Dendritic cell treated with granulocyte-macrophage colony-stimulating factor and Interleukin-4, amounts not matched to agents 40 ng/mL and 50 ng/mL, for 4 days (primary cell): ENCODE measurements at regions of chr17 and their contacts with region 1.

Region 1: GRCh38 chr17:17237026-17237799 is at the start of gene FLCN:
- H3K4me3 Mint-ChIP-seq: peak within 1 kb of the TSS; percentile 99
- H3K27ac Mint-ChIP-seq: peak within 1 kb of the TSS; percentile 99
- H3K4me1 Mint-ChIP-seq: peaks cover 27% of the 10 kb centered on the region
- H3K27me3 Mint-ChIP-seq: no peaks in the 10 kb centered on the region

Region 2: DNA sequence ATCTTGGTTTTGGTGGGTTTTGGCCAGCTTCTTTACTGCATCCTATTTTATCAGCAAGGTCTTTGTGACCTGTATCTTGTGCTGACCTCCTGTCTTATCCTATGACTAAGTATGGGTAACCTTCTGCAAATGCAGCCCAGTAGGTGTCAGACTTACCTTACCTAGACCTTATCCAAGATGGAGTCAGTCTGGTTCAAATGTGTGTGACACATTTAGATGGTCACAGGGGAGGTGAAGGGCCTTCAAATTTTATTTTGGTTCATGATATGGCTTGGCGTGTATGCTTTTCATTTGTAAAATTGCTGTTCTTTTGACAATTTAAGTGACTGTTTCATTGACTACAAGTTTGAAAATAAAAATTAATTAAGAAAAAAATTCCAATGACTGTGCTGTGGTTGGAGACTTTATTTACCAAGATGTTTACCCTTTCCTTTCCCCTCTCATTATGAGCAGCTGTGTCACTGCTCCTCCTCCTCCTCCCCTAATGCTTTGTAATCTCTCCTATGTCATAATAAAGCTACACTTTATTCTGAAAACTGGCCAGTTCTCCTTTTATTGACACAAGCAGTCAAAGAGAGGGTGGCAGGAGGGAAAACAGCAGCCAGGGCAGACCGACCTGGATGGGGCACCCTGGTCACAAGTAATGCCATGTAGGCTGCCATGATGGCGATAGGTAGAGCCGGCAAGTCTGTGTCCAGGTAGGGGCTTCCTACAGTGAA is 314.7 kb before region 1 on chr17:
- intact Hi-C with region 1: no loop called
- H3K4me3 Mint-ChIP-seq: no peak overlapping the region
- H3K27ac Mint-ChIP-seq: no peak overlapping the region
- H3K4me1 Mint-ChIP-seq: no peaks in the 10 kb centered on the region
- H3K27me3 Mint-ChIP-seq: no peaks in the 10 kb centered on the region

Region 3: GRCh38 chr17:17001874-17002520 is 235.2 kb before region 1 on chr17:
- intact Hi-C with region 1: loop called (anchors 5 kb)
- H3K4me3 Mint-ChIP-seq: no peak overlapping the region
- H3K27ac Mint-ChIP-seq: no peak overlapping the region
- H3K4me1 Mint-ChIP-seq: peaks cover 6% of the 10 kb centered on the region
- H3K27me3 Mint-ChIP-seq: peaks cover 30% of the 10 kb centered on the region

Region 4: GRCh38 chr17:17280613-17281549 is 43.7 kb after region 1 on chr17 and contains the start of gene COPS3:
- intact Hi-C with region 1: loop called (anchors 1 kb)
- H3K4me3 Mint-ChIP-seq: peak within 1 kb of the TSS; percentile 78
- H3K27ac Mint-ChIP-seq: peak within 1 kb of the TSS; percentile 85
- H3K4me1 Mint-ChIP-seq: peaks cover 51% of the 10 kb centered on the region
- H3K27me3 Mint-ChIP-seq: no peaks in the 10 kb centered on the region